H1 (cell line): ENCODE measurements at regions of chr13 and their contacts with region 1.

Region 1: DNA sequence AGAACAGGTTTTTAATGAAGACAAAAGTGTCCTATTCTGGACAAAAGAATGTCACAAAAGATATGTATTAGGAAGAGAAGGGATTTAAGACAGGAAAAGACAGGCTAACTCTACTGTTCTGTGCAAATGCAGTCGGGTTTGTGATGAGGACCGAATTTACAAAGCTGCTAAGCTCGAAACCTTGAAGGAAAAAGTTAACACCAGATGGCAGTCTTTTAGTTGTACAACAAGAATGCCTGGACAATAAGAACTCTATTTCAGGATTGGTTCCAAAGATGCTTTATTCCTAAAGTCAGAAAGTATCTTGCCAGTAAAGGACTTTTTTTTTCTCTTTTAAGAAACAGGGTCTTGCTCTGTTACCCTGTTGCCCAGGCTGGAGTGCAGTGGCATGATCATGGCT is 51.1 kb downstream of the HS6ST3 start:
- DNase-seq: no peak
- H3K4me3 ChIP-seq: no peak overlapping the region
- H3K27ac ChIP-seq: no peak overlapping the region
- H3K4me1 ChIP-seq: no peaks in the 10 kb centered on the region
- H3K27me3 ChIP-seq: no peaks in the 10 kb centered on the region
- CTCF ChIP-seq: peak in 2 of 3 experiments; percentile 32 to 44; a peak in 2 of 4 replicates
- EP300 ChIP-seq: no peak
- POLR2A ChIP-seq: no peak
- RAD21 ChIP-seq: peak; percentile 52 to 57

Region 2: DNA sequence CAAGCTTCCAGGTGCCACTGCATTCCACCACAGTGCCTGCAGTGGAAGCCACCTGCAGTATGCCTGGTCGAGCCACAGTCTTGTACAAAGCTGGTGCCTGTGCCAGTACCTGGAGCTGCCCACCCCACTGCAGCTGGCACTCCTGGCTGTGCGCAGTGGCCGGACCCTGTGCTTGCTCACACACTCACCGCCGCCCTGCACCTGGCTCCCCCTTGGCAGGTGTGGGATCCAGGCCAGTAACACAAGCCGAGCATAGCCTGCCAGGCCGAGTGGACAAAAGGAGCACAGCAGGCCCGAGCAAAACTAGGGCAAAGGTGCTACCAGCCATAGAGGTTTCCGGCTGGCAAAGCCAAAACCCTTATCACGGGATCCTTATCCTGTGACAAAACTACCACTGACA is 106.4 kb before region 1 on chr13:
- CTCF ChIA-PET with region 1: no interaction called
- POLR2A ChIA-PET with region 1: no interaction called
- DNase-seq: no peak
- H3K4me3 ChIP-seq: no peak overlapping the region
- H3K27ac ChIP-seq: no peak overlapping the region
- H3K4me1 ChIP-seq: peaks cover 0 to 14% (median 2%) of the 10 kb centered on the region in 4 experiments; a peak in 1 of 7 replicates
- H3K27me3 ChIP-seq: no peaks in the 10 kb centered on the region
- CTCF ChIP-seq: no peak
- EP300 ChIP-seq: no peak
- POLR2A ChIP-seq: no peak
- RAD21 ChIP-seq: no peak

Region 3: GRCh38 chr13:96130818-96131340 is 10.1 kb before region 1 on chr13:
- CTCF ChIA-PET with region 1: interaction called, 13 read pairs
- POLR2A ChIA-PET with region 1: no interaction called
- DNase-seq: no peak
- H3K4me3 ChIP-seq: no peak overlapping the region
- H3K27ac ChIP-seq: no peak overlapping the region
- H3K4me1 ChIP-seq: no peaks in the 10 kb centered on the region; a peak in 1 of 7 replicates
- H3K27me3 ChIP-seq: no peaks in the 10 kb centered on the region
- CTCF ChIP-seq: no peak
- EP300 ChIP-seq: no peak
- POLR2A ChIP-seq: no peak
- RAD21 ChIP-seq: no peak